Vagina (tissue), 2 donors: ENCODE measurements at regions of chr5 and their contacts with region 1.

Region 1: DNA sequence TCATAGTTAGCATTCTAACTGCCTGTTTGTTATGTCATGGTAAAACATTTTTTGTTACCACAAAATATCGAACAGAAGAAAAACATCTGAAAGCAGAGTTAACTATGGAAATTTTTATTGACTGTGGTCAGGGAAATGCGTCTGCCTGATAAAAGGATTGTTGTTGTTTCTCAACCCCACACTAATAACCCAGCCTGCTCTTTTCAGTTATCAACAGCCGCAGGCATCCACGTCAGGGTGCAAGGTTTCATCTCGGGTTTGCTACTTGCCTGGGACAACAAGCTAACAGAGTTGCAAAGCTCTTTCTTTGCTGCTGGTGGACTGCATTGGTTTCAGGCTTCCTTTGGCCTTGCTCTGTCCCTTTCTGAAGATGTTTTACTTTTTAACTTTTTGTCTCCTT is 969.2 kb downstream of the CDH18 start:
- DNase-seq: no peak
- H3K4me3 ChIP-seq: no peak overlapping the region
- H3K27ac ChIP-seq: no peak overlapping the region
- H3K4me1 ChIP-seq: no peaks in the 10 kb centered on the region
- H3K27me3 ChIP-seq: no peaks in the 10 kb centered on the region
- CTCF ChIP-seq: no peak
- POLR2A ChIP-seq: no peak

Region 2: GRCh38 chr5:17037751-17038150 is 1981.1 kb before region 1 on chr5:
- intact Hi-C with region 1: loop called (anchors 5 kb)
- DNase-seq: no peak
- H3K4me3 ChIP-seq: no peak overlapping the region
- H3K27ac ChIP-seq: no peak overlapping the region
- H3K4me1 ChIP-seq: no peaks in the 10 kb centered on the region
- H3K27me3 ChIP-seq: no peaks in the 10 kb centered on the region
- CTCF ChIP-seq: no peak
- POLR2A ChIP-seq: no peak

Region 3: DNA sequence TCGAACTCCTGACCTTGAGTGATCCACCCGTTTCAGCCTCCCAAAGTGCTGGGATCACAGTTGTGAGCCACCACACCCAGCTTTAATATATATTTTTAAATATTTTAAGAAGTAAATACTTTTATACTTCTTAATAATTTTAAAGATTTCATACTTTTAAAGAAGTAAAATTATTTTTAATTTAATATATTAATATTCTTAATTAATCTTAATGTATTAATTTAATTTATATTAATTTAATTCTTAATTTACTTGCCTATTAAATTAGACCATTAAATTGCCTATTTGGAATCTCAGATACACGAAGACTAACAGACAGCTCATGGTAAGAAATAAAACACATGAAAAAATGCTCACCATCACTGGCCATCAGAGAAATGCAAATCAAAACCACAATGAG is 118.2 kb before region 1 on chr5:
- intact Hi-C with region 1: no loop called
- DNase-seq: no peak
- H3K4me3 ChIP-seq: no peak overlapping the region
- H3K27ac ChIP-seq: no peak overlapping the region
- H3K4me1 ChIP-seq: no peaks in the 10 kb centered on the region
- H3K27me3 ChIP-seq: no peaks in the 10 kb centered on the region
- CTCF ChIP-seq: no peak
- POLR2A ChIP-seq: no peak